Activated CD4-positive, alpha-beta T cell treated with anti-CD3 and anti-CD28 coated beads, Interleukin-2, amount 10 ng/mL, durations not matched to agents 24 days and 14 days (primary cell): ENCODE measurements at regions of chr1 and their contacts with region 1.

Region 1: GRCh38 chr1:151008190-151008860 is at the start of gene PRUNE1:
- DNase-seq: peak; percentile 98
- H3K4me3 Mint-ChIP-seq: peak within 1 kb of the TSS; percentile 100
- H3K27ac Mint-ChIP-seq: peak within 1 kb of the TSS; percentile 90
- H3K4me1 Mint-ChIP-seq: peaks cover 58% of the 10 kb centered on the region
- H3K27me3 Mint-ChIP-seq: no peaks in the 10 kb centered on the region
- total RNA-seq, gene PRUNE1: 13.3 and 15.2 TPM in 2 replicates

Region 2: GRCh38 chr1:150363426-150364230 is 644.7 kb before region 1 on chr1 and contains the start of gene RPRD2:
- intact Hi-C with region 1: loop called (anchors 5 kb)
- DNase-seq: peak; percentile 100
- H3K4me3 Mint-ChIP-seq: peak within 1 kb of the TSS; percentile 89
- H3K27ac Mint-ChIP-seq: peak within 1 kb of the TSS; percentile 93
- H3K4me1 Mint-ChIP-seq: peaks cover 25% of the 10 kb centered on the region
- H3K27me3 Mint-ChIP-seq: peaks cover 2% of the 10 kb centered on the region
- total RNA-seq, gene RPRD2: 23.7 and 24.6 TPM in 2 replicates

Region 3: DNA sequence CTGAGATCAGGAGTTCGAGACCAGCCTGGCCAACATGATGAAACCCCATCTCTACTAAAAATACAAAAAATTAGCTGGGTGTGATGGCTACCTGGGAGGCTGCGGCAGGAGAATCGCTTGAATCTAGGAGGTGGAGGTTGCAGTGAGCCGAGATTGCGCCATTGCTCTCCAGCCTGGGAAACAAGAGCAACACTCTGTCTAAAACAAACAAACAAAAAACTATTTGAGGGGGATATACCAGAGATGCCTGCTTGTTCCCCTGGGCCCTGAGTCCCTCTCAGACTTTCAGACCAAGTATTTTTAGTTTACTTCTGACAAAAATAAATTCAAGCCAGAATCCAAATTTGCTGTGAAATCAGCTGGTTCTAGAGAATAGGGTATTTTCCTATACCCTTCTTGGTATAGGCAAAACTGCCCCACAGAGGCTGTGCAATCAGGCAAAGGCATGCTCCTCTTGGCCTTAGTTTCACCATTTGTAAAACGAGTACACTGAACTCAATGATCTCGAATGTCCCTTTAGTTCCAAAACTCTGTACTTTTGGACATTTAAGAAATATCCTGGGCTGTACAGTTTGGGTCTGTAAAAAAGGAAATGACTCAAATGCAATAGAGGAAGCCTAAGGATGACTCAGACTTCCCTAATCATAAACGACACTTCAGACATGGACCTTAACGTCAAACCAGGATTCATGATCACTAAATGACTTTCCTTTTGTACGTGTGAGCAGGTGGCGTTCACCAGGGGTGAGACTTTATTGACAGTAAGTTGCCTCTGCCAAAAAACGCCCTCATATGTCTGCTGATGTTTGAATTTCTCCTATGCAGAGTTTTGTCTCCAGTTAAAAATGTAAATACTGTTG is 395.0 kb before region 1 on chr1:
- intact Hi-C with region 1: loop called (anchors 5 kb)
- DNase-seq: peak; percentile 84
- H3K4me3 Mint-ChIP-seq: peak overlapping the region; percentile 78
- H3K27ac Mint-ChIP-seq: peak overlapping the region; percentile 95
- H3K4me1 Mint-ChIP-seq: peaks cover 55% of the 10 kb centered on the region
- H3K27me3 Mint-ChIP-seq: no peaks in the 10 kb centered on the region

Region 4: GRCh38 chr1:150979092-150980056 is 29.0 kb before region 1 on chr1:
- intact Hi-C with region 1: loop called (anchors 2 kb)
- DNase-seq: peak; percentile 97
- H3K4me3 Mint-ChIP-seq: no peak overlapping the region
- H3K27ac Mint-ChIP-seq: peak overlapping the region; percentile 10
- H3K4me1 Mint-ChIP-seq: peaks cover 25% of the 10 kb centered on the region
- H3K27me3 Mint-ChIP-seq: no peaks in the 10 kb centered on the region

Region 5: GRCh38 chr1:151059078-151059907 is 51.0 kb after region 1 on chr1 and contains the start of gene CDC42SE1:
- intact Hi-C with region 1: loop called (anchors 2 kb)
- DNase-seq: peak; percentile 96
- H3K4me3 Mint-ChIP-seq: peak within 1 kb of the TSS; percentile 99
- H3K27ac Mint-ChIP-seq: peak within 1 kb of the TSS; percentile 99
- H3K4me1 Mint-ChIP-seq: peaks cover 63% of the 10 kb centered on the region
- H3K27me3 Mint-ChIP-seq: no peaks in the 10 kb centered on the region
- total RNA-seq, gene CDC42SE1: 189 and 190 TPM in 2 replicates

Region 6: DNA sequence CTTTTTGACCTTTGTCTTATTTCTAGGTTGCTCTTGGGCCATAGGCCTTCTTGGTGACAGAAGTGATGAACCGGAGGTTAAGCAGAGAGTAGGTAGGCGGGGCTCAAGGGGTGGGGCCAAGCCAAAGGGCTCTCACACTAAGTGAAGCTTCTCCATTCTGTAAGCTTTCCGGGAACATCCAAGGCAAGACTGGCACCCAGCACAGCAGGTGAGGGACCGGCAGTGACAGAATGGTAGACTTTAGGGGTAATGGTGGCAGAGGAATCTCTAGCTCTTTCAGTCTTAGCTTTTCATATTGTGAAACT is 148.1 kb after region 1 on chr1 and contains the start of gene TNFAIP8L2:
- intact Hi-C with region 1: loop called (anchors 1 kb)
- DNase-seq: peak; percentile 94
- H3K4me3 Mint-ChIP-seq: peak within 1 kb of the TSS; percentile 97
- H3K27ac Mint-ChIP-seq: peak within 1 kb of the TSS; percentile 96
- H3K4me1 Mint-ChIP-seq: peaks cover 42% of the 10 kb centered on the region
- H3K27me3 Mint-ChIP-seq: no peaks in the 10 kb centered on the region
- total RNA-seq, gene TNFAIP8L2: 29.4 and 32.5 TPM in 2 replicates